Activated B cell treated with CpG ODN at 0.5 μM for 24 hours (primary cell): ENCODE measurements at regions of chr11 and their contacts with region 1.

Region 1: GRCh38 chr11:22337596-22338485 is at the start of gene SLC17A6:
- DNase-seq: no peak
- ATAC-seq: no peak
- H3K4me3 Mint-ChIP-seq: no peak within 1 kb of the TSS
- H3K27ac Mint-ChIP-seq: no peak within 1 kb of the TSS
- H3K4me1 Mint-ChIP-seq: peaks cover 4% of the 10 kb centered on the region
- H3K27me3 Mint-ChIP-seq: peaks cover 41% of the 10 kb centered on the region
- CTCF ChIP-seq: no peak
- total RNA-seq, gene SLC17A6: not detected in 2 replicates

Region 2: GRCh38 chr11:22304337-22304961 is 33.4 kb before region 1 on chr11:
- CTCF ChIA-PET with region 1: no interaction called
- POLR2A ChIA-PET with region 1: no interaction called
- intact Hi-C with region 1: no loop called
- DNase-seq: no peak
- ATAC-seq: no peak
- H3K4me3 Mint-ChIP-seq: no peak overlapping the region
- H3K27ac Mint-ChIP-seq: no peak overlapping the region
- H3K4me1 Mint-ChIP-seq: no peaks in the 10 kb centered on the region
- H3K27me3 Mint-ChIP-seq: peaks cover 5% of the 10 kb centered on the region
- CTCF ChIP-seq: no peak

Region 3: DNA sequence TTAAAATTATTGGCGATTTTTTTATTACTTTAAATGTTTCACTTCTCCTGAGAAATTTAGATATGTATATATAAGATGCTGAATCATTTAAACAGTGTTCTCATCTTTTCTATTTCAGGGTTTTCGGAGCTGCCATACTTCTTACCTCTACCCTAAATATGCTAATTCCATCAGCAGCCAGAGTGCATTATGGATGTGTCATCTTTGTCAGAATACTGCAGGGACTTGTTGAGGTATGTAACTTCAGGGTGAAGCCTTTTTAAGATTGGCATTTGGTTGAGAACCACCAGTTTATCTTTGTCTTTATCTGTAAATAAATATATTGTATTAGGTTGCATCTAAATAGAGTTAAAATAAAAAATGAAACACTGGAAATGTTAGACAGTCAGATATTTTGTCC is 21.5 kb after region 1 on chr11:
- CTCF ChIA-PET with region 1: no interaction called
- POLR2A ChIA-PET with region 1: no interaction called
- intact Hi-C with region 1: no loop called
- DNase-seq: no peak
- ATAC-seq: no peak
- H3K4me3 Mint-ChIP-seq: no peak overlapping the region
- H3K27ac Mint-ChIP-seq: no peak overlapping the region
- H3K4me1 Mint-ChIP-seq: no peaks in the 10 kb centered on the region
- H3K27me3 Mint-ChIP-seq: no peaks in the 10 kb centered on the region
- CTCF ChIP-seq: no peak

Region 4: GRCh38 chr11:22625448-22626287 is 287.8 kb after region 1 on chr11 and contains the start of gene FANCF:
- CTCF ChIA-PET with region 1: no interaction called
- POLR2A ChIA-PET with region 1: no interaction called
- intact Hi-C with region 1: loop called (anchors 10 kb)
- DNase-seq: peak; percentile 78
- ATAC-seq: peak; percentile 94
- H3K4me3 Mint-ChIP-seq: peak within 1 kb of the TSS; percentile 100
- H3K27ac Mint-ChIP-seq: peak within 1 kb of the TSS; percentile 99
- H3K4me1 Mint-ChIP-seq: peaks cover 42% of the 10 kb centered on the region
- H3K27me3 Mint-ChIP-seq: no peaks in the 10 kb centered on the region
- CTCF ChIP-seq: no peak
- total RNA-seq, gene FANCF: 21.1 and 21.9 TPM in 2 replicates

Region 5: DNA sequence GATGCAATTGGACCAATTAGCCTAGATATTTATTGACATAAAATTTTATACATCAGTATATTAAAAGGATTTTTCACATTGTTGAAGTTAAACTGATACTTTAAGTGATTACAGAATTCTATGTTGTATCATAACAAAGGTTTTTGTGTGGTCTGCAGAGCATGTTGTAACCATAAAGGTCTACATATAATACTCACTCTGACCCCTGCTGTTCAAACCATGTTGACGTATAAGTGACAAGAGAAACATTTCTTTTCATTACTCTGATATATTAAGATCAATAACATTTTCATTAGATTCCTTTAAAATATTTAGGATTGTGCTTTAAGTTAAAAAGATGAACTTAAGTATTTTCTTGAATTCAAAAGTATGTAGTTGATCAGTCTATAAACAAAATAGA is 392.5 kb after region 1 on chr11:
- CTCF ChIA-PET with region 1: no interaction called
- POLR2A ChIA-PET with region 1: no interaction called
- intact Hi-C with region 1: loop called (anchors 1 kb)
- DNase-seq: no peak
- ATAC-seq: no peak
- H3K4me3 Mint-ChIP-seq: no peak overlapping the region
- H3K27ac Mint-ChIP-seq: no peak overlapping the region
- H3K4me1 Mint-ChIP-seq: no peaks in the 10 kb centered on the region
- H3K27me3 Mint-ChIP-seq: no peaks in the 10 kb centered on the region
- CTCF ChIP-seq: no peak

Region 6: GRCh38 chr11:22787551-22788162 is 449.8 kb after region 1 on chr11:
- CTCF ChIA-PET with region 1: interaction called, 27 read pairs
- POLR2A ChIA-PET with region 1: no interaction called
- intact Hi-C with region 1: loop called (anchors 1 kb)
- DNase-seq: no peak
- ATAC-seq: peak; percentile 40
- H3K4me3 Mint-ChIP-seq: no peak overlapping the region
- H3K27ac Mint-ChIP-seq: no peak overlapping the region
- H3K4me1 Mint-ChIP-seq: no peaks in the 10 kb centered on the region
- H3K27me3 Mint-ChIP-seq: peaks cover 3% of the 10 kb centered on the region
- CTCF ChIP-seq: peak; percentile 65

Region 7: DNA sequence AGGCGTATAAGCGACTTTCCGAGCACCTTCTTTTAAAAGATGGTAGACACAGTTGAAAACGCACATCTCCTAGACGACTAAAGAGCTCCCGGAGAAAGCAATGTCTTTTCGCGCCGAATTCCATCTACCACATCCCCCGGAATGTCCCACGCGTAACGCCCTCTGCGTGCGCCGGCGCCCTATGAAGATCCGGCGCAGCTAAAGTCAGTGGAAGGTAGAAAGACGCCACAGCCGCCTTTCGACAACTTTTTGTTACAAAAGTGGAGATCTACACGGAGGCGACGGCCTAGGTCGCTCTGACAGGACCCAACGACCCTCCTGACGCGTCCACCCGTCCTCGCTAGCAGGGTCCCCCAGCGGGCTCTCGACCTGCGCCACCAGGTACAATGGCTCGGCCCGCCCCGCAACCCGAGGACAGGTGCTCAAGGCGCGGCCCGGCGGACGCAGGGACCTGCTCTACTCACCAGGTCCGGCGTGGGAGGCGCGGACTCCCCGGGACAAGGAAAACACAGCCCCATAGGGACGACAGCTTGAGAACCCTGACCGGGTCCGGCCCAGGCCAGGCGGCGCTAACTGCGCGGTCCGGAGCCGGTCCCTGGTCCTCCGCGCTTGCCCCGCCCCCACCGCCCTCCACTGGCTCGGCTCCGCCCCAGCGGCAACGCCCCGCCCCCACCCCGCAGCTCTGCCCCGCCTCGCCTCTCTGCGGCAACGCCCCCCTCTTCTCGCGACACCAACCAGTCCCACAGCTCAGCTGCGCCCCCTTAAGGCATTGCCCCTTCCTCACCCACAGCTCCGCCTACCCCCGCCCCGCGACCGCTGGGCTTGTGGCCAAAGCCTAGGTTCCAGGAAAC is 491.6 kb after region 1 on chr11 and contains the start of gene SVIP:
- CTCF ChIA-PET with region 1: no interaction called
- POLR2A ChIA-PET with region 1: no interaction called
- intact Hi-C with region 1: loop called (anchors 1 kb)
- DNase-seq: peak; percentile 86
- ATAC-seq: peak; percentile 97
- H3K4me3 Mint-ChIP-seq: peak within 1 kb of the TSS; percentile 94
- H3K27ac Mint-ChIP-seq: peak within 1 kb of the TSS; percentile 84
- H3K4me1 Mint-ChIP-seq: peaks cover 14% of the 10 kb centered on the region
- H3K27me3 Mint-ChIP-seq: no peaks in the 10 kb centered on the region
- CTCF ChIP-seq: no peak
- total RNA-seq, gene SVIP: 16.9 and 22.1 TPM in 2 replicates

Region 8: DNA sequence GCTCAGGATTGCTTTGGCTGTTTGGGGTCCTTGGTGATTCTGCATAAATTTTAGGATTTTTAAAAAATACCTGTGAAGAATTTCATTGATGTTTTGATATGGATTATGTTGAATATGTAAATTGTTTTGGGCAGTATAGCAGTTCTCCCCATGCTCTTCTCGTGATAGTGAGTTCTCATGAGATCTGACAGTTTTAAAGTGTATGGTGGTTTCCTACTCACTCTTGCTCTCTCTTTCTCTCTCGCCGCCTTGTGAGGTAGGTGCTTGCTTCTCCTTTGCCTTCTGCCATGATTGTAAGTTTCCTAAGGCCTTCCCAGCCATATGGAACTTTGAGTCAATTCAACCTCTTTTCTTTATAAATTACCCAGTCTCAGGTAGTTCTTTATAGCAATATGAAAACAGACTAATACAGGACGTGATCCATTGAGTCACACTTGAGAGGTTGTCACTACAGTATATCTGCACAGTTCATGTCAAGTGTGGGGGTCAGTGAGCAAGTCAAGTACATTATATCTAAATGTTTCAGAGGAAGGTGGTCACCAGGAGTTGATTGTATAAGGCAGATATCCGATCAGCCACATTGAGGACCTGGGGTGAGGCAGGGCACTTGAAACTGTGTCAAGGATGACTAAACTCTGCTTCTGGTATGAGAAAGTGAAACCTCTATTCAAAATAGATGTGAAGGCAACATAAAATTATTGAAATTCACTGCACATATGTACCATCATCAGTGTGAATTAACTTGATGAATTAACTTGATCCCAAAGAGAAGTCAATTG is 593.2 kb after region 1 on chr11:
- CTCF ChIA-PET with region 1: no interaction called
- POLR2A ChIA-PET with region 1: no interaction called
- intact Hi-C with region 1: no loop called
- DNase-seq: no peak
- ATAC-seq: no peak
- H3K4me3 Mint-ChIP-seq: no peak overlapping the region
- H3K27ac Mint-ChIP-seq: no peak overlapping the region
- H3K4me1 Mint-ChIP-seq: peaks cover 9% of the 10 kb centered on the region
- H3K27me3 Mint-ChIP-seq: no peaks in the 10 kb centered on the region
- CTCF ChIP-seq: no peak